T-cell (primary cell): ENCODE measurements at regions of chr14 and their contacts with region 1.

Region 1: DNA sequence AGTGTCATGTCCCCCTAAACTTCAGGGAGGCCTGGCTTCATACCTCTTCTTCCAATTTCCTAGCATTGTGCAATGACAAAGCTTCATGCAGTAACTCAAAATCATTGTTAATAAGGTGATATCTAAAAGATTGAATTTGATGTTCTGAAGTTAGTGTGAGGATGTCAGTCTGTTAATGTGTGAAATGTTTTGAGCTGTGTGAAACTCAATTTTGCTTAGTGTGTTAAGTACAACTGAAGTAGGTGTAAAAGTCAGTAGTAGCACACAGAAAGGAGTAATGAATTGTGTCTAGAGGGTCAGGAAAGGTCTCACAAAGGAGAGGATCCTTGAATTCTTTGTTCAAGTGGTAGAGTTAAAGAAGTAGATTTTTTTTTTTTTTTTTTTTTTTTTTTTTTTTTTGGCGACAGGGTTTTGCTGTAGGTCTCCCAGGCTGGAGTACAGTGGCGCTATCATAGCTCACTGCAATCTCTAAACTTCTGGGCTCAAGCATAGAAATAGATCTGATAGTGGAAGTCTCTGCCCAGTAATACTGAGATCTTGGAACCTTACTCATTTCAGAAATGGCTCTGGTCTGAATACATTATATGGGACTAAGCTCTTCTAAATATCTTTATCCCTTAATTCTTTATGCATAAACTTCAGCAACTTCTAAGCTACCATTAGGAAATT is 63.9 kb downstream of the FUT8 start:
- DNase-seq: no peak
- ATAC-seq: no peak
- H3K4me3 ChIP-seq: no peak overlapping the region
- H3K4me3 Mint-ChIP-seq: no peak overlapping the region
- H3K27ac ChIP-seq: no peak overlapping the region
- H3K27ac Mint-ChIP-seq: no peak overlapping the region
- H3K4me1 ChIP-seq: peaks cover 0 to 5% of the 10 kb centered on the region in 2 experiments
- H3K4me1 Mint-ChIP-seq: peaks cover 60 to 72% (median 69%) of the 10 kb centered on the region in 3 donors
- H3K27me3 ChIP-seq: no peaks in the 10 kb centered on the region
- H3K27me3 Mint-ChIP-seq: no peaks in the 10 kb centered on the region

Region 2: DNA sequence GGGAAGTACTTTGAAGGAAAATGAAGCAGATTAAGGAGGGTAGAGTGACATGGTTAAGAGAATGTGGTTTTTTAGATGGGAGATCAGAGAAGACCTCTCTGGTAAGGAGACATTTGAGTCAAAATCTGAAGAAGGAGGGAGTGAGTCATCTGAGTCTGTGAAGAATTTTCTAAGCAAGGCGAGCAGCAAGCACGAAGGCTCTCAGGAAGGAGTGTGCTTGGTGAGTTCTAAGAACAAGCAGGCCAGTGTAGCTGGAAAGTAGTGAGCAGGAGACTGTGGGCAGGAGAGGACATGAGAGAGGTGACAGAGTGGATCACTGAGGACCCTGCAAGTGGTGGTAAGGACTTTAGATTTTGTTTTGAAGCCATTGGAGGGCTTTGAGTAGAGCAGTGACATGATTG is 140.2 kb before region 1 on chr14:
- CTCF ChIA-PET with region 1: no interaction called
- POLR2A ChIA-PET with region 1: no interaction called
- DNase-seq: peak in 1 of 35 experiments; percentile 23
- ATAC-seq: peak; percentile 42 to 91 (median 86)
- H3K4me3 ChIP-seq: no peak overlapping the region
- H3K4me3 Mint-ChIP-seq: no peak overlapping the region
- H3K27ac ChIP-seq: no peak overlapping the region
- H3K27ac Mint-ChIP-seq: peak overlapping the region; percentile 83 to 86
- H3K4me1 ChIP-seq: peaks cover 16% of the 10 kb centered on the region in 2 experiments
- H3K4me1 Mint-ChIP-seq: peaks cover 33 to 39% (median 34%) of the 10 kb centered on the region in 3 donors
- H3K27me3 ChIP-seq: no peaks in the 10 kb centered on the region
- H3K27me3 Mint-ChIP-seq: no peaks in the 10 kb centered on the region

Region 3: DNA sequence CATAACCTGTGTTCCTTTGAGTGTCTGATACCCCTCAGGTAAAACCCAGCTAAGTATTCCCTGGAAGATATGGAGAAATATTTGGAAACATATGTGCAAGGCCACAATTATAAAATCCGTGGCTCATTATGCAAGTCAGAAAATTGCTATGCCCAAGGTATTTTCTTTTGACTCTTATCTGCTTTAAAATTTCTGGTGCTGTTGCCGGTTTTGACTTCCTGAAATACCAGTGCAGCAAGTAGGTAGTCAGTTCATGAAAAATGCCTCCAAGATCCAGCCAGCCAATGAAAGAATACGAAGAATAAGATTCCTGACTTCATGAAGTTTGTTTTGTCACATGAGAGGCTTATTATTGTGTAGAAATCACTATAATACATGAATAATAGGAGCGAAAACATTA is 84.1 kb before region 1 on chr14:
- CTCF ChIA-PET with region 1: no interaction called
- POLR2A ChIA-PET with region 1: no interaction called
- DNase-seq: no peak
- ATAC-seq: no peak
- H3K4me3 ChIP-seq: no peak overlapping the region
- H3K4me3 Mint-ChIP-seq: no peak overlapping the region
- H3K27ac ChIP-seq: no peak overlapping the region
- H3K27ac Mint-ChIP-seq: no peak overlapping the region
- H3K4me1 ChIP-seq: no peaks in the 10 kb centered on the region
- H3K4me1 Mint-ChIP-seq: no peaks in the 10 kb centered on the region
- H3K27me3 ChIP-seq: no peaks in the 10 kb centered on the region
- H3K27me3 Mint-ChIP-seq: no peaks in the 10 kb centered on the region

Region 4: GRCh38 chr14:65456247-65456646 is 20.2 kb before region 1 on chr14:
- CTCF ChIA-PET with region 1: no interaction called
- POLR2A ChIA-PET with region 1: interaction called, 3 to 11 read pairs
- DNase-seq: no peak
- ATAC-seq: no peak
- H3K4me3 ChIP-seq: no peak overlapping the region
- H3K4me3 Mint-ChIP-seq: no peak overlapping the region
- H3K27ac ChIP-seq: no peak overlapping the region
- H3K27ac Mint-ChIP-seq: no peak overlapping the region
- H3K4me1 ChIP-seq: no peaks in the 10 kb centered on the region
- H3K4me1 Mint-ChIP-seq: peaks cover 32 to 44% (median 38%) of the 10 kb centered on the region in 3 donors
- H3K27me3 ChIP-seq: no peaks in the 10 kb centered on the region
- H3K27me3 Mint-ChIP-seq: no peaks in the 10 kb centered on the region

Region 5: DNA sequence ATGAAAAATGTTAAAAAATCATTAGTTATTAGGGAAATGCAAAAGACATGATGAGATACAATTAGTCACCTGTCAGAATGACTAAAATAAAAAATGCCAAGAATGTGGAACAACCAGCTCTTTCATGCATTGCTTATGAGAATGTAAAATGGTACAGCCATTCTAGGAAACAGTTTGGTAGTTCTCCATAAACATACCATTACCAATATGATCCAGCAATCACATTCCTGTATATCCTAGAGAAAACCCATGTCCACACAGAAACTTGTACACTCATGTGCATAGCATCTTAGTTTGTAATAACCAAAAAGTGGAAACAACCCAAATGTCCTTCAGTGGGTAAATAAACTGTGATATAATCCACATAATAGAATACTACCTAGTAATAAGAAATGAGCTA is 181.8 kb after region 1 on chr14:
- CTCF ChIA-PET with region 1: no interaction called
- POLR2A ChIA-PET with region 1: no interaction called
- DNase-seq: no peak
- ATAC-seq: no peak
- H3K4me3 ChIP-seq: no peak overlapping the region
- H3K4me3 Mint-ChIP-seq: no peak overlapping the region
- H3K27ac ChIP-seq: no peak overlapping the region
- H3K27ac Mint-ChIP-seq: no peak overlapping the region
- H3K4me1 ChIP-seq: no peaks in the 10 kb centered on the region
- H3K4me1 Mint-ChIP-seq: peaks cover 0 to 3% (median 0%) of the 10 kb centered on the region in 3 donors
- H3K27me3 ChIP-seq: no peaks in the 10 kb centered on the region
- H3K27me3 Mint-ChIP-seq: no peaks in the 10 kb centered on the region